ENCODE measurements at regions of chr1 and their contacts with region 1.

Region 1: DNA sequence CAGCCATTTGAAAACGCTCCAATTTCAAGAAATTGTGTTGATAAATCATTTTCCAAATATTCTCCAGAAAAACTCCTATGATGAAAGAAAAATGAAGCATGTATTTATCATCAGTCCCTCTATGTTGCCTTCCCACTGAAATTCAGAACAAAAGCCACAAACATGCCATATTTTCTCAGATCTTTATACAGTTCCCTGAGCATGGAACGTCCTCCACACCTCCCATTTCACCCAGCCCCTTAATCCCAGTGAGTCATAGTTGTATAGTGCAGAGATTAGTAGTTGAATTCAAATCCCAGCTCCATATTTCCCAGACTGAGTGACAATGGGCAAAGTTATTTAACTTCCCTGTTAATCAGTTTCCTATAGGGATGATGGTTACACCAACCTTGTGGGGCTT is 20.6 kb upstream of the NPL start:
- DNase-seq: no peak
- H3K4me3 Mint-ChIP-seq: no peak overlapping the region
- H3K27ac Mint-ChIP-seq: no peak overlapping the region
- H3K4me1 Mint-ChIP-seq: no peaks in the 10 kb centered on the region
- H3K27me3 Mint-ChIP-seq: peaks cover 5% of the 10 kb centered on the region

Region 2: GRCh38 chr1:182731852-182732545 is 37.0 kb before region 1 on chr1:
- intact Hi-C with region 1: loop called (anchors 5 kb)
- DNase-seq: no peak
- H3K4me3 Mint-ChIP-seq: no peak overlapping the region
- H3K27ac Mint-ChIP-seq: no peak overlapping the region
- H3K4me1 Mint-ChIP-seq: no peaks in the 10 kb centered on the region
- H3K27me3 Mint-ChIP-seq: peaks cover 18% of the 10 kb centered on the region

Region 3: GRCh38 chr1:184118046-184118445 is 1349.1 kb after region 1 on chr1:
- intact Hi-C with region 1: no loop called
- DNase-seq: no peak
- H3K4me3 Mint-ChIP-seq: no peak overlapping the region
- H3K27ac Mint-ChIP-seq: no peak overlapping the region
- H3K4me1 Mint-ChIP-seq: peaks cover 11% of the 10 kb centered on the region
- H3K27me3 Mint-ChIP-seq: no peaks in the 10 kb centered on the region